GM12878 (cell line): ENCODE measurements at regions of chr19 and their contacts with region 1.

Region 1: GRCh38 chr19:6590827-6591319 is at the start of gene CD70:
- DNase-seq: peak; percentile 88
- ATAC-seq: peak; percentile 66
- H3K4me3 ChIP-seq: peak within 1 kb of the TSS; percentile 100
- H3K27ac ChIP-seq: peak within 1 kb of the TSS; percentile 93
- H3K4me1 ChIP-seq: peaks cover 34% of the 10 kb centered on the region
- H3K27me3 ChIP-seq: no peaks in the 10 kb centered on the region
- CTCF ChIP-seq: no peak
- EP300 ChIP-seq: peak in 1 of 2 experiments; percentile 57; a peak in 1 of 4 replicates
- POLR2A ChIP-seq: peak; percentile 96
- RAD21 ChIP-seq: 0 out of 2 replicates have a peak, but pooled peaks have one; percentile 1
- polyA plus RNA-seq, gene CD70: 16.4 to 35.8 TPM

Region 2: GRCh38 chr19:6521718-6522646 is 68.9 kb before region 1 on chr19:
- CTCF ChIA-PET with region 1: interaction called, 8 read pairs
- POLR2A ChIA-PET with region 1: interaction called, 9 read pairs
- RAD21 ChIA-PET with region 1: interaction called, 26 read pairs
- SMC1A ChIA-PET with region 1: interaction called, 14 read pairs
- in situ Hi-C with region 1: loop called (anchors 5 kb)
- intact Hi-C with region 1: loop called (anchors 2 kb)
- DNase-seq: peak; percentile 95
- ATAC-seq: peak; percentile 70
- H3K4me3 ChIP-seq: peak overlapping the region; percentile 60
- H3K27ac ChIP-seq: peak overlapping the region; percentile 99
- H3K4me1 ChIP-seq: peaks cover 52% of the 10 kb centered on the region
- H3K27me3 ChIP-seq: no peaks in the 10 kb centered on the region
- CTCF ChIP-seq: no peak
- EP300 ChIP-seq: peak; percentile 85 to 86; a peak in 2 of 4 replicates
- POLR2A ChIP-seq: peak; percentile 82
- RAD21 ChIP-seq: no peak

Region 3: GRCh38 chr19:6535558-6536137 is 55.2 kb before region 1 on chr19:
- CTCF ChIA-PET with region 1: interaction called, 6 read pairs
- POLR2A ChIA-PET with region 1: interaction called, 12 read pairs
- RAD21 ChIA-PET with region 1: interaction called, 17 read pairs
- SMC1A ChIA-PET with region 1: interaction called, 5 read pairs
- in situ Hi-C with region 1: no loop called
- intact Hi-C with region 1: loop called (anchors 2 kb)
- DNase-seq: no peak
- ATAC-seq: no peak
- H3K4me3 ChIP-seq: 0 out of 2 replicates have a peak overlapping the region, but pooled peaks have one; percentile 17
- H3K27ac ChIP-seq: no peak overlapping the region
- H3K4me1 ChIP-seq: peaks cover 38% of the 10 kb centered on the region
- H3K27me3 ChIP-seq: no peaks in the 10 kb centered on the region
- CTCF ChIP-seq: no peak
- EP300 ChIP-seq: no peak
- POLR2A ChIP-seq: no peak
- RAD21 ChIP-seq: no peak

Region 4: GRCh38 chr19:6551607-6552450 is 39.0 kb before region 1 on chr19:
- CTCF ChIA-PET with region 1: interaction called, 8 read pairs
- POLR2A ChIA-PET with region 1: interaction called, 6 read pairs
- RAD21 ChIA-PET with region 1: interaction called, 6 read pairs
- SMC1A ChIA-PET with region 1: interaction called, 8 read pairs
- in situ Hi-C with region 1: no loop called
- intact Hi-C with region 1: loop called (anchors 5 kb)
- DNase-seq: no peak
- ATAC-seq: peak; percentile 91
- H3K4me3 ChIP-seq: no peak overlapping the region; the same call in 1 of the 2 replicates
- H3K27ac ChIP-seq: peak overlapping the region; percentile 72
- H3K4me1 ChIP-seq: peaks cover 35% of the 10 kb centered on the region
- H3K27me3 ChIP-seq: no peaks in the 10 kb centered on the region
- CTCF ChIP-seq: peak; percentile 23 to 60 (median 47)
- EP300 ChIP-seq: peak; percentile 25 to 36; a peak in 1 of 4 replicates
- POLR2A ChIP-seq: peak; percentile 63
- RAD21 ChIP-seq: peak; percentile 40

Region 5: DNA sequence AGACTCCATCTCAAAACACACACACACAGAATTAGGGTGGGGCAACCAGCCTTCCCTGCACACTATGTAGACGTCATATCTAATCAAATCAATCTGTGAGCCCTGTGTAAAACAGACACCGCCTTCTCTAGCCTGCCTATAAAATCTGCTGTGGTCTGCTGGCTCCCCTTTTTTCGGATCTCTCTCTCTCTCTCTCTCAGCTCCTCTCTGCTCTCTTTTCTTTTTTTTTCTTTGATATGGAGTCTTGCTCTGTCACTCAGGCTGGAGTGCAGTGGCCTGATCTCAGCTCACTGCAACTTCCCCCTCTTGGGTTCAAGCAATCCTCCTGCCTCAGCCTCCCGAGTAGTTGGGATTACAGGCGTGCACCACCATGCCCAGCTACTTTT is 11.8 kb after region 1 on chr19:
- CTCF ChIA-PET with region 1: interaction called, 5 read pairs
- POLR2A ChIA-PET with region 1: interaction called, 46 read pairs
- RAD21 ChIA-PET with region 1: interaction called, 30 read pairs
- SMC1A ChIA-PET with region 1: interaction called, 100 read pairs
- in situ Hi-C with region 1: no loop called
- intact Hi-C with region 1: no loop called
- DNase-seq: no peak
- ATAC-seq: peak; percentile 14
- H3K4me3 ChIP-seq: peak overlapping the region; percentile 76; the same call in 1 of the 2 replicates
- H3K27ac ChIP-seq: peak overlapping the region; percentile 95
- H3K4me1 ChIP-seq: peaks cover 27% of the 10 kb centered on the region
- H3K27me3 ChIP-seq: no peaks in the 10 kb centered on the region
- CTCF ChIP-seq: no peak
- EP300 ChIP-seq: no peak
- POLR2A ChIP-seq: no peak
- RAD21 ChIP-seq: no peak

Region 6: GRCh38 chr19:6660930-6661329 is 70.1 kb after region 1 on chr19:
- CTCF ChIA-PET with region 1: no interaction called
- POLR2A ChIA-PET with region 1: no interaction called
- RAD21 ChIA-PET with region 1: no interaction called
- SMC1A ChIA-PET with region 1: no interaction called
- in situ Hi-C with region 1: no loop called
- intact Hi-C with region 1: no loop called
- DNase-seq: no peak
- ATAC-seq: no peak
- H3K4me3 ChIP-seq: no peak overlapping the region
- H3K27ac ChIP-seq: peak overlapping the region; percentile 6; the same call in 1 of the 2 replicates
- H3K4me1 ChIP-seq: peaks cover 26% of the 10 kb centered on the region
- H3K27me3 ChIP-seq: no peaks in the 10 kb centered on the region
- CTCF ChIP-seq: no peak
- EP300 ChIP-seq: no peak
- POLR2A ChIP-seq: no peak
- RAD21 ChIP-seq: no peak

Region 7: GRCh38 chr19:6687117-6687516 is 96.2 kb after region 1 on chr19:
- CTCF ChIA-PET with region 1: no interaction called
- POLR2A ChIA-PET with region 1: no interaction called
- RAD21 ChIA-PET with region 1: no interaction called
- SMC1A ChIA-PET with region 1: no interaction called
- in situ Hi-C with region 1: no loop called
- intact Hi-C with region 1: no loop called
- DNase-seq: no peak
- ATAC-seq: peak; percentile 32
- H3K4me3 ChIP-seq: no peak overlapping the region
- H3K27ac ChIP-seq: no peak overlapping the region
- H3K4me1 ChIP-seq: peaks cover 4% of the 10 kb centered on the region
- H3K27me3 ChIP-seq: no peaks in the 10 kb centered on the region
- CTCF ChIP-seq: no peak
- EP300 ChIP-seq: no peak
- POLR2A ChIP-seq: no peak
- RAD21 ChIP-seq: no peak

Region 8: GRCh38 chr19:6697291-6697690 is 106.4 kb after region 1 on chr19:
- CTCF ChIA-PET with region 1: no interaction called
- POLR2A ChIA-PET with region 1: no interaction called
- RAD21 ChIA-PET with region 1: no interaction called
- SMC1A ChIA-PET with region 1: no interaction called
- in situ Hi-C with region 1: no loop called
- intact Hi-C with region 1: no loop called
- DNase-seq: no peak
- ATAC-seq: peak; percentile 29
- H3K4me3 ChIP-seq: no peak overlapping the region
- H3K27ac ChIP-seq: no peak overlapping the region
- H3K4me1 ChIP-seq: no peaks in the 10 kb centered on the region
- H3K27me3 ChIP-seq: no peaks in the 10 kb centered on the region
- CTCF ChIP-seq: no peak
- EP300 ChIP-seq: no peak
- POLR2A ChIP-seq: no peak
- RAD21 ChIP-seq: no peak

Region 9: DNA sequence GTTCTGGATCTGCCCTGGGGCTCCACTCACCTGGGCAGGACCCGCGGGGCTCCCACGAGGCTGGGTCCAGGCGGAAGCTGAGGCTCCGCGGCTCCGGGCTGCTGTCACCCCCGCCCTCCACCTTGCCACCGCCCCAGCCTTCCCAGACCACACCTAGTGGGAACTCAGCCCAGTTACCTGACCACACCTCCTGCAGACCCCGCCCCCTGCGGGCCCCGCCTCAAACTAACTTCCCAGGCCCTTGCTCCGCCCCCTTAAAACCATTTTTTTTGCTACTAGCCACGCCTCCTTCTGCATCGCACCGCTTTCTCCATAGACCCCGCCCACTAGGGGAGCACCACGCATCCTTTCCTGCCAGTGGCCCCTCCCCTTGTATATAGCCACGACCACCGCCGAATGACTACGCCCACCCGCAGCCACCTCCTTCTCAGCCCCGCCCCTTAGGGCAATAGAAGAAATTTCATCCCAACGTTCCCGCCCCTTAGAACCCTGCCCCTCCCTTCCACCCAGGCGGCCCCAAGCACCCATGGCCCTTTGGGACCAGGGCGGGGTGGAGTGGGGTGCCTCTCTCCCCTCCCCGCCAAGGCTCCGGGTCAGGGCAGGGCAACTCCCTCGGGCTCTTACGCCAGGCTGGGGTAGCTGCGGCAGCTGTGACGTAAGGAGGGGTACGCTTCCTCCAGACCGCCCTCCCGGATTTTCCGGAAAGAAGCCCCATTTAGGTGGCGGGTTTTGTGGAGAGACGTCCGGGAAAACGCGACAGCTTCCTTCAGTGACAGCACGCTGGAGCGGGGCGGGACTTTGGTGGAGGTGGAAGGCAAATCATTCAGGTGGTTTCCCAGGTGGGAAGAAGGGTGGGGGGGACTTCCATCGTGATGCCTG is 176.7 kb after region 1 on chr19 and contains the start of gene SH2D3A:
- CTCF ChIA-PET with region 1: interaction called, 3 read pairs
- POLR2A ChIA-PET with region 1: interaction called, 3 read pairs
- RAD21 ChIA-PET with region 1: no interaction called
- SMC1A ChIA-PET with region 1: interaction called, 3 read pairs
- in situ Hi-C with region 1: no loop called
- intact Hi-C with region 1: loop called (anchors 5 kb)
- DNase-seq: peak; percentile 92
- ATAC-seq: peak; percentile 79
- H3K4me3 ChIP-seq: peak within 1 kb of the TSS; percentile 85
- H3K27ac ChIP-seq: peak within 1 kb of the TSS; percentile 83
- H3K4me1 ChIP-seq: peaks cover 23% of the 10 kb centered on the region
- H3K27me3 ChIP-seq: no peaks in the 10 kb centered on the region
- CTCF ChIP-seq: no peak
- EP300 ChIP-seq: no peak; a peak in 1 of 4 replicates
- POLR2A ChIP-seq: peak; percentile 70; the same call in 1 of the 2 replicates
- RAD21 ChIP-seq: no peak
- polyA plus RNA-seq, gene SH2D3A: 0.77 to 1.4 TPM